Heart right ventricle (tissue), 16 donors: ENCODE measurements at regions of chr10 and their contacts with region 1.

Region 1: GRCh38 chr10:116690356-116691322 is 51.7 kb downstream of the HSPA12A start:
- DNase-seq: peak; percentile 37 to 58
- ATAC-seq: peak; percentile 52 to 77 (median 58)
- H3K4me3 ChIP-seq: peak overlapping the region in 1 of 10 donors; percentile 11
- H3K27ac ChIP-seq: peak overlapping the region in 8 of 10 donors; percentile 5 to 72 (median 58)
- H3K4me1 ChIP-seq: peaks cover 14 to 67% (median 48%) of the 10 kb centered on the region in 9 donors
- H3K27me3 ChIP-seq: no peaks in the 10 kb centered on the region
- CTCF ChIP-seq: peak in 8 of 9 donors; percentile 13 to 67 (median 48)

Region 2: DNA sequence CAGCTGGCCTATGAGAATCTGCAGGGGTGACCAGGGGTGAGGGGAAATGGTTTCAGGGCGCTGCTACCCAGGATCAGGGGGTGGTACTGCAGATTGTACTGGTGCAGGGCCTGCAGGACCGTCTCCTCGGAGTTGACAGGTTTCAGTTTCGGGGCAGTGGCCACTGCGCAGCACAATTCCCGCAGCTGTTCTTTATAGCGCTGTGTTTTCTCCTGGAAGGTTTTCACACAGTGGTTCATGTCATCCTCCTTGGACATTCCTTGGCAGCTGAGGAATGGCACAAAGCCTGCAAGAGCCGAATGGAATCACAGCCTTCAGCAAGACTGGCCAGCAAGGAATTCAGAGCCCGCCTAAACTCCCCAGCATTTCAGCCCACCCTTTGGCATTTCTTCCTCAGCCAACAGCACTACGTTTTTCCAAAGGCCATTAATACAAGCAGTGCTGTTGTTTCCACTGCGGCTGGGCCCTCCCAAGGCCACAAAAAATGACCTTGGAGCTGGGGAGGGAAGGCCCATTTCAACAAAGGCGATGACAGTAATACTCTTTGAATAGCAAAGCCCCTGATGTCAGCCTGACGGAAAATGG is 25.0 kb before region 1 on chr10:
- intact Hi-C with region 1: no loop called
- DNase-seq: peak in 1 of 2 donors; percentile 22
- ATAC-seq: peak; percentile 40 to 76 (median 66)
- H3K4me3 ChIP-seq: peak overlapping the region in 5 of 10 donors; percentile 19 to 31 (median 26)
- H3K27ac ChIP-seq: peak overlapping the region in 1 of 10 donors; percentile 25
- H3K4me1 ChIP-seq: no peaks in the 10 kb centered on the region
- H3K27me3 ChIP-seq: peaks cover 0 to 36% (median 17%) of the 10 kb centered on the region in 7 donors
- CTCF ChIP-seq: no peak

Region 3: GRCh38 chr10:116742367-116743265 is 52.0 kb after region 1 on chr10 and contains the start of gene HSPA12A:
- intact Hi-C with region 1: loop called in 8 of 10 experiments (anchors 2 to 10 kb)
- DNase-seq: peak; percentile 73 to 82
- ATAC-seq: peak; percentile 87 to 95 (median 94)
- H3K4me3 ChIP-seq: peak within 1 kb of the TSS; percentile 67 to 95 (median 84)
- H3K27ac ChIP-seq: peak within 1 kb of the TSS; percentile 74 to 97 (median 95)
- H3K4me1 ChIP-seq: peaks cover 3 to 19% (median 17%) of the 10 kb centered on the region in 9 donors
- H3K27me3 ChIP-seq: peaks cover 0 to 76% (median 18%) of the 10 kb centered on the region in 7 donors
- CTCF ChIP-seq: no peak
- total RNA-seq, gene HSPA12A: 9.1 to 18.1 (median 10.7) TPM

Region 4: GRCh38 chr10:116771101-116771958 is 80.7 kb after region 1 on chr10:
- intact Hi-C with region 1: loop called in 1 of 10 experiments (anchors 5 kb)
- DNase-seq: peak; percentile 46 to 57
- ATAC-seq: peak; percentile 32 to 77 (median 66)
- H3K4me3 ChIP-seq: no peak overlapping the region
- H3K27ac ChIP-seq: peak overlapping the region in 9 of 10 donors; percentile 15 to 69 (median 39)
- H3K4me1 ChIP-seq: peaks cover 0 to 46% (median 17%) of the 10 kb centered on the region in 9 donors
- H3K27me3 ChIP-seq: peaks cover 0 to 10% (median 0%) of the 10 kb centered on the region in 7 donors
- CTCF ChIP-seq: no peak

Region 5: GRCh38 chr10:117167789-117168674 is 477.4 kb after region 1 on chr10:
- intact Hi-C with region 1: loop called in 2 of 10 experiments (anchors 10 kb)
- DNase-seq: peak; percentile 13 to 66
- ATAC-seq: peak; percentile 81 to 92 (median 86)
- H3K4me3 ChIP-seq: peak overlapping the region in 5 of 10 donors; percentile 2 to 31 (median 21)
- H3K27ac ChIP-seq: no peak overlapping the region
- H3K4me1 ChIP-seq: peaks cover 0 to 43% (median 21%) of the 10 kb centered on the region in 9 donors
- H3K27me3 ChIP-seq: peaks cover 48 to 100% (median 100%) of the 10 kb centered on the region in 7 donors
- CTCF ChIP-seq: peak; percentile 53 to 96 (median 78)